ENCODE measurements at regions of chr11 and their contacts with region 1.

Region 1: GRCh38 chr11:10405855-10406592 is 49.0 kb upstream of the AMPD3 start:
- DNase-seq: peak; percentile 69
- ATAC-seq: peak; percentile 92
- H3K4me3 Mint-ChIP-seq: no peak overlapping the region
- H3K27ac Mint-ChIP-seq: no peak overlapping the region
- H3K4me1 Mint-ChIP-seq: peaks cover 10% of the 10 kb centered on the region
- H3K27me3 Mint-ChIP-seq: no peaks in the 10 kb centered on the region
- CTCF ChIP-seq: peak; percentile 70

Region 2: DNA sequence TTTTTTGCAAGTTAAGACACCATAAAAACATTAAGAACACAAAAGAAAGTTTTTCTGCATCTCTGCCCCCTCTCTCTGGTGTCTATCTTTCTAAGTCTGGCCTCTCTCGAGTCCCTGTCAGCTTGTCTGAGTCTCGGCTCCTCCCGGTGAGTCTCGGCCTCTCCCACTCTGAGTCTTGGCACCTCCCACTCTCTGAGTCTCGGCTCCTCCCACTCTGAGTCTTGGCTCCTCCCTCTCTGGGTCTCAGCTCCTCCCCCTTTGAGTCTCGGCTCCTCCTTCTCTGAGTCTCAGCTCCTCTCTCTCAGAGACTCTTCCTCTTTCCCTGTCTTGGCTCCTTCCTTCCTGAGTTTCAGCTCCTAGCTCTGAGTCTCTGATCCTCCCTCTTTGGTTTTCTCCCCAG is 23.5 kb before region 1 on chr11:
- CTCF ChIA-PET with region 1: no interaction called
- POLR2A ChIA-PET with region 1: no interaction called
- intact Hi-C with region 1: no loop called
- DNase-seq: no peak
- ATAC-seq: peak; percentile 80
- H3K4me3 Mint-ChIP-seq: no peak overlapping the region
- H3K27ac Mint-ChIP-seq: no peak overlapping the region
- H3K4me1 Mint-ChIP-seq: no peaks in the 10 kb centered on the region
- H3K27me3 Mint-ChIP-seq: peaks cover 17% of the 10 kb centered on the region
- CTCF ChIP-seq: no peak

Region 3: DNA sequence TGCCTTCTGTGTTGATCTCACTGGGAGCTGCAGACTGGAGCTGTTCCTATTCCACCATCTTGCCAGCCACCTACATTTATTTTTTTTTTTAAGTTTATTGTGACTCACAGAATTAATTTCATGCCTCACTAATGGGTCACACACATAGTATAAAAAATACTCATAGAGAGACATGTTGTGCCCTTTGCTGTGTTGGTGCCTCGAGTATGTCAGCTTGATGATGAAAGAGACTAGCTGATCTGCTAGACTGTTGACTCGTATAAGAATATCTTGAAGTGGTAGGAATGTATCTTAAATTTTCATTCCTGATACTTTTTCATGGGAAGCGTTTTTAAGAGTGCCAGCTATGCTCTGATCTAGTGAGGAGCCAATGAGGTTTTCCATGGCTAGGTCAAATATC is 20.5 kb after region 1 on chr11:
- CTCF ChIA-PET with region 1: interaction called, 12 read pairs
- POLR2A ChIA-PET with region 1: no interaction called
- intact Hi-C with region 1: no loop called
- DNase-seq: no peak
- ATAC-seq: no peak
- H3K4me3 Mint-ChIP-seq: no peak overlapping the region
- H3K27ac Mint-ChIP-seq: no peak overlapping the region
- H3K4me1 Mint-ChIP-seq: no peaks in the 10 kb centered on the region
- H3K27me3 Mint-ChIP-seq: peaks cover 2% of the 10 kb centered on the region
- CTCF ChIP-seq: no peak

Region 4: GRCh38 chr11:10648891-10649290 is 242.9 kb after region 1 on chr11:
- CTCF ChIA-PET with region 1: interaction called, 65 read pairs
- POLR2A ChIA-PET with region 1: no interaction called
- intact Hi-C with region 1: loop called (anchors 2 kb)
- DNase-seq: no peak
- ATAC-seq: no peak
- H3K4me3 Mint-ChIP-seq: no peak overlapping the region
- H3K27ac Mint-ChIP-seq: no peak overlapping the region
- H3K4me1 Mint-ChIP-seq: no peaks in the 10 kb centered on the region
- H3K27me3 Mint-ChIP-seq: no peaks in the 10 kb centered on the region
- CTCF ChIP-seq: no peak

Region 5: GRCh38 chr11:10653926-10654810 is 248.1 kb after region 1 on chr11:
- CTCF ChIA-PET with region 1: interaction called, 65 read pairs
- POLR2A ChIA-PET with region 1: no interaction called
- intact Hi-C with region 1: loop called (anchors 2 kb)
- DNase-seq: peak; percentile 46
- ATAC-seq: peak; percentile 64
- H3K4me3 Mint-ChIP-seq: no peak overlapping the region
- H3K27ac Mint-ChIP-seq: no peak overlapping the region
- H3K4me1 Mint-ChIP-seq: peaks cover 21% of the 10 kb centered on the region
- H3K27me3 Mint-ChIP-seq: no peaks in the 10 kb centered on the region
- CTCF ChIP-seq: peak; percentile 79

Region 6: DNA sequence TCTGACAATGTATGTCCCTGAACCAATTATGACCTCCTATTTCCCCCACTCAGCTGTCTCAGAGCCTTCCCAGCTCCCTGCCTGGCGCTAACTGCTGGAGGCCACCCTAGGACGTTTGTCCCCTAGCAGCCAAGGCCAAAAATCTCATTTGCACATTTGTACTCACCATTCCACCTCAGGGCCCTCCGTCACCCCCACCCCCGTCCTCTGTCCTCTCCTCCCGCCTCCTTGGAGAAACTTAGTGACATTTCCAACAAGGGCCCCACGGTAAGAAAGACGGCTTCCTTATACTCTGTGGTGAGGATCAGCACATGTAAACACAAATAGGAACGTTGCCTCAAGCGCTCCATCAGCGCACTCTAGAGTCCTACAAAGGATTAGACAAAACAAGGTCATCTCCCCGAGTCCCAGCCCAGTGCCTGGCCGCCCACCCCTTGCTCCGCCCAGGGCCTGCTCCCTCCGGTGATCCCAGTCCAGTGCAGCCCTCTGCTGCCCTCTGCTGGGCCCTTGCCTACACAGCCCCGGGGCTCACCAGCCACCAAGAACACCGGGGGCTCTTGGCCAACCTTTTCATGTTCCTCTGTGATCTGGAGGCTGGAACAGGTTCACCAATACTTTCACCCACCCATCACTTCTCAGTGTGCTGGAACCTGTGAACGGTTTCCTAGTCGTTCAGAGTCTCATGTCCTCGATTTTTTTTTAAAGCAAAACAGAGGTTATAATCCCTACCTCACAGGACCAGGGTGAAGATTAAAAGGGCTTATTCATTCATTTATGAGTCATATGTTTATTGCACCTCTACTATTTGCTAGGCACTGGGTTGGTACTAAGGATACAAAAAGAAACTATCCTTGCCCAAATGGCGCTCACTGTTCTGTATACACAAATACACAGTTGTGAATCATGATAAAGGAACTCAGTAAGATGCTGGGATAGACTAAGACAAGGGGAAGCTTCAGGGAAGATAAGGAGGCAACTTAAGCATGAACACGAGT is 329.8 kb after region 1 on chr11:
- CTCF ChIA-PET with region 1: interaction called, 39 read pairs
- POLR2A ChIA-PET with region 1: no interaction called
- intact Hi-C with region 1: no loop called
- DNase-seq: peak; percentile 96
- ATAC-seq: peak; percentile 100
- H3K4me3 Mint-ChIP-seq: no peak overlapping the region
- H3K27ac Mint-ChIP-seq: no peak overlapping the region
- H3K4me1 Mint-ChIP-seq: peaks cover 9% of the 10 kb centered on the region
- H3K27me3 Mint-ChIP-seq: peaks cover 1% of the 10 kb centered on the region
- CTCF ChIP-seq: peak; percentile 92

Region 7: DNA sequence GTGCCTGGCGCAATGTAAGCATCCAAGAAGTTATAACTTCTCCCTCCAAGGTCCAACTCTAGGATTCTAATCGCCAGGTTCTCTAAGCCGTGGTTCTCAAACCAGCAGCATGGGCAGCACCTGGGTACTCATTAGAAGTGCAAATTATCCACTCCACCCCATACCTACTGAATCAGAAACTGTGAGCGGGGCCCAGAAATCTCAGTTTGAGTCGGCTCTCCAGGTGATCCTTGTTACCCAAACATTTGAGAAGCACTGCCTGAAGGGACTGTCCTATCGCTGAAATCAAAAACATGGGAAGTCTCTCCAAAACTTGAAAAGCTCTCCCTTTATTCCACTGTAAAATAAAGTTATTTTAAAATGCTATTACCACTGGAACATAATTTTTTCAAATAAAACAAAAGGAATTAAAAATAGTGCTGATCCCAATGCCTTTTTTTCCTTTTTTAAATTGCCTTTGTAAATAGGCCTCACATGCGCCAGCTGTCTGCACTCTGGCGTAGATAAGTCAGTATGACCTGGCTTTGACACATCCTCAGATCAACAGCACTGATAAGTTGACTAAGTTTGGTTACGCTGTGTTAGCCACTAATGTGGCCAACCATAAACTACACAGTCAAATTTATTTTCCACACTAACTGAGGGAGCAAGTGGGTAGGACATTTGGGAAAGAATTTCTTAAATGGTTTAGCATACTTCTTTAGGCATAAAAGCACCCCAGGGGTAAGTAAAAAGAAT is 336.6 kb after region 1 on chr11:
- CTCF ChIA-PET with region 1: interaction called, 39 read pairs
- POLR2A ChIA-PET with region 1: interaction called, 3 read pairs
- intact Hi-C with region 1: no loop called
- DNase-seq: peak; percentile 59
- ATAC-seq: peak; percentile 84
- H3K4me3 Mint-ChIP-seq: peak overlapping the region; percentile 34
- H3K27ac Mint-ChIP-seq: peak overlapping the region; percentile 52
- H3K4me1 Mint-ChIP-seq: peaks cover 32% of the 10 kb centered on the region
- H3K27me3 Mint-ChIP-seq: no peaks in the 10 kb centered on the region
- CTCF ChIP-seq: no peak

Region 8: GRCh38 chr11:10943968-10944367 is 537.9 kb after region 1 on chr11:
- CTCF ChIA-PET with region 1: no interaction called
- POLR2A ChIA-PET with region 1: no interaction called
- intact Hi-C with region 1: no loop called
- DNase-seq: no peak
- ATAC-seq: no peak
- H3K4me3 Mint-ChIP-seq: no peak overlapping the region
- H3K27ac Mint-ChIP-seq: no peak overlapping the region
- H3K4me1 Mint-ChIP-seq: peaks cover 3% of the 10 kb centered on the region
- H3K27me3 Mint-ChIP-seq: no peaks in the 10 kb centered on the region
- CTCF ChIP-seq: no peak

Measured in activated CD8-positive, alpha-beta T cell treated with anti-CD3 and anti-CD28 coated beads for 36 hours (primary cell).